CD8-positive, alpha-beta T cell (primary cell): ENCODE measurements at regions of chr2 and their contacts with region 1.

Region 1: GRCh38 chr2:169131587-169132512 is 62.5 kb downstream of the DHRS9 start:
- DNase-seq: peak in 2 of 9 experiments; percentile 73 to 77
- ATAC-seq: peak; percentile 91
- H3K4me3 ChIP-seq: no peak overlapping the region
- H3K4me3 Mint-ChIP-seq: no peak overlapping the region
- H3K27ac ChIP-seq: no peak overlapping the region
- H3K27ac Mint-ChIP-seq: no peak overlapping the region
- H3K4me1 ChIP-seq: no peaks in the 10 kb centered on the region
- H3K4me1 Mint-ChIP-seq: peaks cover 13% of the 10 kb centered on the region
- H3K27me3 ChIP-seq: no peaks in the 10 kb centered on the region
- H3K27me3 Mint-ChIP-seq: no peaks in the 10 kb centered on the region
- CTCF ChIP-seq: peak; percentile 95

Region 2: GRCh38 chr2:168956392-168956791 is 175.5 kb before region 1 on chr2:
- CTCF ChIA-PET with region 1: interaction called, 50 read pairs
- POLR2A ChIA-PET with region 1: no interaction called
- intact Hi-C with region 1: loop called (anchors 1 kb)
- DNase-seq: no peak
- ATAC-seq: no peak
- H3K4me3 ChIP-seq: no peak overlapping the region
- H3K4me3 Mint-ChIP-seq: no peak overlapping the region
- H3K27ac ChIP-seq: no peak overlapping the region
- H3K27ac Mint-ChIP-seq: no peak overlapping the region
- H3K4me1 ChIP-seq: no peaks in the 10 kb centered on the region
- H3K4me1 Mint-ChIP-seq: peaks cover 1% of the 10 kb centered on the region
- H3K27me3 ChIP-seq: no peaks in the 10 kb centered on the region
- H3K27me3 Mint-ChIP-seq: no peaks in the 10 kb centered on the region
- CTCF ChIP-seq: no peak

Region 3: GRCh38 chr2:168961450-168962229 is 170.2 kb before region 1 on chr2:
- CTCF ChIA-PET with region 1: interaction called, 50 read pairs
- POLR2A ChIA-PET with region 1: no interaction called
- intact Hi-C with region 1: loop called (anchors 1 kb)
- DNase-seq: peak in 7 of 9 experiments; percentile 3 to 79 (median 28)
- ATAC-seq: peak; percentile 88
- H3K4me3 ChIP-seq: no peak overlapping the region
- H3K4me3 Mint-ChIP-seq: no peak overlapping the region
- H3K27ac ChIP-seq: no peak overlapping the region
- H3K27ac Mint-ChIP-seq: no peak overlapping the region
- H3K4me1 ChIP-seq: peaks cover 15% of the 10 kb centered on the region
- H3K4me1 Mint-ChIP-seq: peaks cover 34% of the 10 kb centered on the region
- H3K27me3 ChIP-seq: no peaks in the 10 kb centered on the region
- H3K27me3 Mint-ChIP-seq: no peaks in the 10 kb centered on the region
- CTCF ChIP-seq: peak; percentile 91

Region 4: GRCh38 chr2:169119126-169119770 is 12.6 kb before region 1 on chr2:
- CTCF ChIA-PET with region 1: interaction called, 44 read pairs
- POLR2A ChIA-PET with region 1: interaction called, 5 read pairs
- intact Hi-C with region 1: no loop called
- DNase-seq: no peak
- ATAC-seq: no peak
- H3K4me3 ChIP-seq: no peak overlapping the region
- H3K4me3 Mint-ChIP-seq: no peak overlapping the region
- H3K27ac ChIP-seq: no peak overlapping the region
- H3K27ac Mint-ChIP-seq: no peak overlapping the region
- H3K4me1 ChIP-seq: no peaks in the 10 kb centered on the region
- H3K4me1 Mint-ChIP-seq: peaks cover 7% of the 10 kb centered on the region
- H3K27me3 ChIP-seq: no peaks in the 10 kb centered on the region
- H3K27me3 Mint-ChIP-seq: peaks cover 4% of the 10 kb centered on the region
- CTCF ChIP-seq: no peak